GM23248 (cell line): ENCODE measurements at regions of chr3 and their contacts with region 1.

Region 1: DNA sequence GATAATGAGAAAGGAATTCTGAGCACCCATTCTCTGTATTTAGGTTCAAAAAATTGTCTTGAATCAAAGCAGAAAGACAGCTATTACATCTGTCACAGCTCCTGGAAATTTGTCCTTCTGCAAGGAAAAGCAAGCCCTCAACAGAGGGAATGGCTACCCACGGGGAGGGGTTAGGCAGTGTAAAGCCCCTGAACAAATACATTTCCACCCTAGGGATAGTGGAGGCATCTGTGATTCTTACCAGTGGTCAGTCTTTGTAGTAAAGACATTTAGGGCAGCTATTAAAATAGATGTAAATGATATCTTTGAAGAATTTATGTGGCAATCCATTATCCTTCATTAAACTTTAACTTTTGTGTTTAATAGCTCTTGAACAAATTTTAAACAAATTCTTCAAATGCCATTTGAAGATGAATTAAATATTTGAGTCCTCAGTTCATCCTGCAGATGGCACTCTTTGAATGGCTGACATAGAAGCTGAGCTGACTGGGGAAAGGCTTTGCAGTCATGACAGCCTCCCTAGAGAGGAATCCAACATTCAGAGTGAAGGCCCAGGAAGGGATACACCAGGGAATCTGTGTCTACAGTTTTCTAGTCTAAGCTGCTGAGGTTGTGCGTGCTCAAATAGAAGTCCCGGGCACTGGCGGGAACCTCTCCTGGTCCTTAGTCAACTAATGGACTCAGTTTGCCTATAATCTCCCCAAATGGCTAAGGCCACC is 359.7 kb upstream of the ROPN1 start:
- DNase-seq: peak; percentile 71
- H3K4me3 ChIP-seq: no peak overlapping the region
- H3K27ac ChIP-seq: no peak overlapping the region
- H3K4me1 ChIP-seq: no peaks in the 10 kb centered on the region
- H3K27me3 ChIP-seq: peaks cover 12% of the 10 kb centered on the region; the same call in 1 of the 2 replicates

Region 2: GRCh38 chr3:124529826-124530571 is 178.4 kb after region 1 on chr3:
- in situ Hi-C with region 1: loop called (anchors 10 kb)
- DNase-seq: peak; percentile 34
- H3K4me3 ChIP-seq: no peak overlapping the region
- H3K27ac ChIP-seq: no peak overlapping the region
- H3K4me1 ChIP-seq: no peaks in the 10 kb centered on the region
- H3K27me3 ChIP-seq: peaks cover 5% of the 10 kb centered on the region; the same call in 1 of the 2 replicates

Region 3: DNA sequence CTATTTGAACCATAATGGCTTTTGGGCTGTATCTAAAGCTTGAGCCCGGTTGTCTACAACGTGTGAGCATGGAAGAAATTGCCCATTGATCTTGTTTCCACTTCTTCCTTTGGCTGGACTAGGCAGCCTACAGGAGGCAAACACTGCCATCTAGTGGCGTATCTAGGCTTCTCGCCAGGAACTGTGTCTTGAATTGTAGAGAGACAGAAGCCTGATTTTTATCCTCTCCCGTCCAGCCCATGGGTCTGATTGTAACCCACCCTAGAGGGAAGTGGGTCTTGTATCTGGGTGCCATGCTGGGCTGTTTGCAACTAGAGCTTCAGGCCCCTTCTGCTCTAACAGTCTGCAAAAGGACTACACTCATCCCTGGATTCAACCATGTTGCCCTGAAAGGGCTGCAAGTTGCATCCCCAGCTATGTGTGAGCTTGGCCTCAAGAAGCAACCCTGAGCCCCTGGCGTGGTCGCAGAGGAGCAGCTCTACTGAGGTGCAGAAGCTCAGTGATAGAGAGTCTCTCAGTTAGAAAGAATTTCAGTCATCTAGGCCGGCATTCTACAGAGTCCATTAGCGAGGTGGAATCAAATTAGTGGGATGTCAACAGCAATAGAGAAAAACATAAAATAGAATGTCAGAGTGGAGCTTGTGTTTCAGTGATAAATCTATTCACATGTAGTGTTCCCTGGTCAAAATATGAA is 208.4 kb after region 1 on chr3:
- in situ Hi-C with region 1: loop called (anchors 10 kb)
- DNase-seq: peak; percentile 86
- H3K4me3 ChIP-seq: no peak overlapping the region
- H3K27ac ChIP-seq: no peak overlapping the region
- H3K4me1 ChIP-seq: peaks cover 21% of the 10 kb centered on the region
- H3K27me3 ChIP-seq: no peaks in the 10 kb centered on the region

Region 4: DNA sequence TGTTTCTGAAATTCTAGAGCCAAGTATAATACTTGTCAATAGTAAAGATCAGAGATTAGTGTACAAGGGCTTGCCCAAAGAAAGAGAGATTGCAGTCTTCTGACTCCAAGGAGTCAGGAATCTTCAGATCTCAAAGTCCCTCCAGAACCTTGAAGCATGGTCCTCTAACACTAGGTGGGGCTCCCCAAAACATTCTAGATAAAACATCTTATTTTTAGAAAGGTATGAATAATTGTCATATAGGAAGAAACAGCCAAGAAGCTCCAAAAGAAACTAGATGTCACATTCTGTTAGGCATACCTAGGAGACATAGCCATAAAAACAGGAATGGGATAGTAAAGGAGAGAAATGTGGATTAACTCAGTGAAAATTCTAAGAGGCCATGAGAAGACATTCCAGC is 572.2 kb after region 1 on chr3:
- in situ Hi-C with region 1: loop called (anchors 25 kb)
- DNase-seq: peak; percentile 51
- H3K4me3 ChIP-seq: no peak overlapping the region
- H3K27ac ChIP-seq: no peak overlapping the region
- H3K4me1 ChIP-seq: no peaks in the 10 kb centered on the region
- H3K27me3 ChIP-seq: no peaks in the 10 kb centered on the region

Region 5: GRCh38 chr3:124962403-124962940 is 610.9 kb after region 1 on chr3:
- in situ Hi-C with region 1: no loop called
- DNase-seq: peak; percentile 59
- H3K4me3 ChIP-seq: no peak overlapping the region
- H3K27ac ChIP-seq: no peak overlapping the region
- H3K4me1 ChIP-seq: peaks cover 7% of the 10 kb centered on the region
- H3K27me3 ChIP-seq: no peaks in the 10 kb centered on the region